ENCODE measurements at regions of chr3 and their contacts with region 1.

Region 1: DNA sequence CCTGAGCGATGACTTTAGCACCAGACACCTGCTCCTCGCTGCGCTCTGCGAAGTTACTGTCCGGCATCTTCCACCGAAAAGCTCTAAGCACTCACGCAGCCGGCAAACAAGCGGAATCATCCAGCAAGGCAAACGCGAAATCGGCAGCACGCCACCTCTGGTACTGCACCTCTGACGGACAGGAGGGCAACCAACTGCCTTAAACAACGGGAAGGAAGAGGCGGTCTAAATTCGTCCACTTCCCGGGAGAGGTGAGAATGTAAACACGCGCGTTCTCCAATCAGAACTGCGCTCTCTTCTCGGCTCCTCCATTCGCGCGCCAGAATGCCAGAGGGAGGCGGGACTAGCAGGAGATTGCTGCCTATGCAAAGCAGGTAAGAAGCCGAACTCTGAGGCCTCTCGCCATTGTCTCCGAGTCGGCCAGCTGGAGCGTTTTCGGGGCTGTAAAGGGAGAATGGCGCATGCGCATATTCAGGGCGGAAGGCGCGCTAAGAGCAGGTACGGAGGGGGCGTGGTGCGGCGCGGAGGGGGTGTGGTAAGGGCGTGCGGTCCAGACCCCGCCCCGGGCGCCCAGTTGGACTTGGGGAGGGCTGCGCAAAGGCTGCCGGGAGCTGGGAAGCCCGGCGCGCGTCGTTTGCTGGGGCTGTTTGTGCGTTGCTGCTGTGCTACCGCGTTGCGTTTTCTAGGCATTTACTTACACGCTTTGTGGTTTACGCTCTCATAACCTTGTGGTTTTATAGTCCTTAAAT is at the starts of genes BTD and HACL1:
- DNase-seq: peak; percentile 97
- ATAC-seq: peak; percentile 89
- H3K4me3 Mint-ChIP-seq: peak within 1 kb of the TSS; percentile 94
- H3K27ac Mint-ChIP-seq: peak within 1 kb of the TSS; percentile 98
- H3K4me1 Mint-ChIP-seq: peaks cover 38% of the 10 kb centered on the region
- H3K27me3 Mint-ChIP-seq: no peaks in the 10 kb centered on the region
- CTCF ChIP-seq: no peak
- total RNA-seq, gene BTD: 7.6 and 9.1 TPM in 2 replicates
- total RNA-seq, gene HACL1: 24.7 and 28.4 TPM in 2 replicates

Region 2: GRCh38 chr3:14651440-14652251 is 949.9 kb before region 1 on chr3 and contains the start of gene CCDC174:
- CTCF ChIA-PET with region 1: no interaction called
- POLR2A ChIA-PET with region 1: interaction called, 5 read pairs
- intact Hi-C with region 1: loop called (anchors 2 kb)
- DNase-seq: peak; percentile 86
- ATAC-seq: peak; percentile 97
- H3K4me3 Mint-ChIP-seq: peak within 1 kb of the TSS; percentile 95
- H3K27ac Mint-ChIP-seq: peak within 1 kb of the TSS; percentile 93
- H3K4me1 Mint-ChIP-seq: peaks cover 34% of the 10 kb centered on the region
- H3K27me3 Mint-ChIP-seq: no peaks in the 10 kb centered on the region
- CTCF ChIP-seq: no peak
- total RNA-seq, gene CCDC174: 30.2 and 32.4 TPM in 2 replicates

Region 3: DNA sequence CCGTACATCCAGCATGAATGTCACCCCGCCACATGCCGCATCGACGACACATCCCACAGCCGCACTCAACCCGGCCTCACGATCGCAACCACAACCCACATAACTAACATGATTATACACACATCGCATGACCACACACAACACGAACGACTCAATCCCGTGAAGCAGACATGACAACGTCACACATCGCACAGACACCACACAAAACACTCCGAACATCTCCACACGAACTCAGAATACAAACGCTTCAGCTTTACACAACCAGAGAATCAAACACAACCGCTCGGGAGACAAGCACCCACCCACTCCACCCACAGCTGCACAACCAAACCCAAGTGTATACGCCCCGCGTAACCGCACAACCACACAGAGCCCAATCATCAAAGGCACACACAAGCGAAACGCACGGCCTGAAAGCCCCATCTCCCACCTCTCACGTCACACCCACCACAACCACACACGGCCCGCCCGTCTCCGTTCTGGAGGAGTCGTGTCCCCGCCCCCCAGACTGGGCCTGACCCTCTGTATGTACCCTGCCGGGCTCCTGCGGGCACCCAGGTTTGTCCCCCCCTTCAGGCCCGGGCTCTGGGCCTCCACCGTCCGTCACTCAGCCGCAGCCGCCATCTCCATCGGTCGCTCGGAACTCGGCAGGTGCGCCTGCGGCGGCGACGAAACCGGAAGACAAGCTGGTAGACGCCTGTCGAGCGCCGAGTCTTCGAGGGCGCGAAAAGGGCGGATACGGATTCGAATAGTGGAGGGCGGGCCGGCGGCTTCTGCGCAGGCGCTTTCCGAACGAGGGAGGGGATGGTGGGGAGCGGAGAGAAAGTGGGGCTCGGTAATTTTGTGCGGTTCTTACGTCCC is 502.8 kb before region 1 on chr3 and contains the start of gene RBSN:
- CTCF ChIA-PET with region 1: no interaction called
- POLR2A ChIA-PET with region 1: no interaction called
- intact Hi-C with region 1: loop called (anchors 2 kb)
- DNase-seq: peak; percentile 89
- ATAC-seq: peak; percentile 79
- H3K4me3 Mint-ChIP-seq: peak within 1 kb of the TSS; percentile 96
- H3K27ac Mint-ChIP-seq: peak within 1 kb of the TSS; percentile 89
- H3K4me1 Mint-ChIP-seq: peaks cover 27% of the 10 kb centered on the region
- H3K27me3 Mint-ChIP-seq: peaks cover 7% of the 10 kb centered on the region
- CTCF ChIP-seq: no peak
- total RNA-seq, gene RBSN: 19.8 and 29.0 TPM in 2 replicates

Region 4: DNA sequence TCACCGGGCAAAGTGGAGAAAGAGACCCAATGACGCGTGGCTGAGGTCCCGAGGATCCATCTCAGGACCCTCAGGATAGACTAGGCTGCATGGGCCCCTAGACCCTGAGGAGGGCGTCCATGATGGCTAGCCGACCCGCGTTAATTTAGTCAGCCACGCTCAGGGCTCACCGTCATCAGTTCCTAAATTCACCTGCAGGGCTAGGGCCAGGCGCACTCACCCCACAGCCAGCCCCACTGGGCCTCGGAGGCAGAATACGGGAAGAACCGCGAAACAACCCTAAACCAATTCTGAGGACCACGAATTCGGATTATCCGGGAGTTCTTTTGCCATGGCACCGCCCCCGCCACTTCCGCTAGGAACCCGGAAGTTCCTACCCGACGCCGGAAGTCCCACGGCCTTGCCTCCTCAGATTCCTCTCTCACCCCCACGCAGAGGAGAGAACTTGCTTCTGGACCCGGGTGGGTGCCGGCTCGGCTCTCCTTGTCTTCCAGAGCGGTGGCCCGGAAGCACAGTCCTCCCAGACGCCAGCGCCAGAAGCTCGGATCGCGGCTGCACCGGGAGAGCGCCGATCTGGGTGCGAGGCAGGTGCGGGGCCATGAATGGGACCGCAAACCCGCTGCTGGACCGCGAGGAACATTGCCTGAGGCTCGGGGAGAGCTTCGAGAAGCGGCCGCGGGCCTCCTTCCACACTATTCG is 174.2 kb before region 1 on chr3 and contains the starts of genes EAF1 and METTL6:
- CTCF ChIA-PET with region 1: no interaction called
- POLR2A ChIA-PET with region 1: no interaction called
- intact Hi-C with region 1: loop called (anchors 1 kb)
- DNase-seq: peak; percentile 76
- ATAC-seq: peak; percentile 92
- H3K4me3 Mint-ChIP-seq: peak within 1 kb of the TSS; percentile 96
- H3K27ac Mint-ChIP-seq: peak within 1 kb of the TSS; percentile 95
- H3K4me1 Mint-ChIP-seq: peaks cover 50% of the 10 kb centered on the region
- H3K27me3 Mint-ChIP-seq: no peaks in the 10 kb centered on the region
- CTCF ChIP-seq: no peak
- total RNA-seq, gene EAF1: 19.2 and 19.7 TPM in 2 replicates
- total RNA-seq, gene METTL6: 18.7 and 20.2 TPM in 2 replicates

Region 5: GRCh38 chr3:15654891-15655290 is 53.3 kb after region 1 on chr3:
- CTCF ChIA-PET with region 1: no interaction called
- POLR2A ChIA-PET with region 1: no interaction called
- intact Hi-C with region 1: no loop called
- DNase-seq: no peak
- ATAC-seq: no peak
- H3K4me3 Mint-ChIP-seq: no peak overlapping the region
- H3K27ac Mint-ChIP-seq: no peak overlapping the region
- H3K4me1 Mint-ChIP-seq: peaks cover 9% of the 10 kb centered on the region
- H3K27me3 Mint-ChIP-seq: no peaks in the 10 kb centered on the region
- CTCF ChIP-seq: no peak

Region 6: DNA sequence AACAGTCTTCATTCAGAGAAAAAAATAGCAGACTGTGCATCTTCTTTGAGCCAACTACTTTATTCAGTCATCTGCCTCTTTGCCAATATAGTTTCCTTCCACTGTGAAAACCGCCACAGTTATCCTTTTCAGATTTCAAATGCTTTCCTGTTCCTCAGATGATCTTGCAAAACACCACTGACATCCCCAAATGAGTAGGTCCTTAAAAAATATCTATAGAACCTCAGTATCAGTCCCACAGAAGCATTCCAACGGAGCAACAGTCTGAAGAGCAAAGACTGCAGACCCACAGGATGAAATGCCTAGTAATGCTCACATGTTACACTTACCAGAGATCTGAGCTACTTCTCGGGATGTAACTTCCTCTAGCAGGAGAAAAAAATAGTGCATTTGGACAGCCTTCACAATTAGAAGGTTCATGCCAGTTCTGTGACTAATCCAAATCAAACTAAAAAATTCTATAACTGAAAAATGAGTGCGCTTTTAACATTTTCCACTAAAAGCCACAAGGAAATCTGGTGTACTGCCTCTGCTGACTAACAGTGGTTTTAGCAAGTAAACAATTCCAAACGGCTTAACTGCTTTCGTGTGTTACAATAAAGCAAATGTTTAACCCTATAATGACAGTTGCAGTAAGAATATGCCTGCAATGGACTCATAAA is 196.2 kb after region 1 on chr3 and contains the start of gene ANKRD28:
- CTCF ChIA-PET with region 1: no interaction called
- POLR2A ChIA-PET with region 1: interaction called, 6 read pairs
- intact Hi-C with region 1: loop called (anchors 1 kb)
- DNase-seq: no peak
- ATAC-seq: peak; percentile 20
- H3K4me3 Mint-ChIP-seq: peak within 1 kb of the TSS; percentile 68
- H3K27ac Mint-ChIP-seq: peak within 1 kb of the TSS; percentile 82
- H3K4me1 Mint-ChIP-seq: peaks cover 66% of the 10 kb centered on the region
- H3K27me3 Mint-ChIP-seq: no peaks in the 10 kb centered on the region
- CTCF ChIP-seq: no peak
- total RNA-seq, gene ANKRD28: 27.5 and 29.9 TPM in 2 replicates

Measured in activated B cell treated with CpG ODN at 0.5 μM for 24 hours (primary cell).